ENCODE measurements at regions of chr20 and their contacts with region 1.

Region 1: DNA sequence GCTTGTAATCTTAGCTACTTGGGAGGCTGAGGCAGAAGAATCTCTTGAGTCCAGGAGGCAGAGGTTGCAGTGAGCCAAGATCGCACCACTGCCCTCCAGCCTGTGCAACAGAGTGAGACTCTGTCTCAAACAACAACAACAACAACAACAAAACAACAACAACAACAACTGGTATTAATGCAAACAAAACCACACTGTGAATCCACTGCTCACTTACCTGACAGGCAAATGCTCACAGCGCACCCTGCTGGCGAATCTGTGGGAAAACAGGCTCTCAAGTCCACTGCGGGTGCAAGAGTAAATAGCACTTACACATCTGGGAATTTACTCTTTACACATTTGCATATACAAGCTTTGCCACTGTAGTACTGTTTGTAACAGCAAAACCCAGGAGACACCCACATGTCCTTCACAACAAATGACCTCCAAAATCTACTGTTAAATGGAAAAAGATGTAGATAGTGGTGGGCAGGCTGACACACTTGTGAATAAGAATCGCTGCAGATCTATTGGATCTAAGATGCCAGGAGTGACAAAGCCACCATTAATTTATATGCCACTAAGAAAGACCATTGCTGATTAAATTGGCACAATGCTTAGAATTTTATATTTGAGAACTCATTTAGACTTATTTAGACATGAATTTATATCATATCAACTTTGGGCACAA is 29.3 kb downstream of the NSFL1C start:
- DNase-seq: peak; percentile 73 to 77 (median 74)
- H3K4me3 ChIP-seq: no peak overlapping the region
- H3K4me3 Mint-ChIP-seq: peak overlapping the region in 2 of 8 donors; percentile 27 to 53
- H3K27ac ChIP-seq: no peak overlapping the region
- H3K27ac Mint-ChIP-seq: peak overlapping the region in 3 of 7 donors; percentile 11 to 30 (median 22)
- H3K4me1 ChIP-seq: peaks cover 20% of the 10 kb centered on the region
- H3K4me1 Mint-ChIP-seq: peaks cover 23 to 59% (median 40%) of the 10 kb centered on the region in 4 donors
- H3K27me3 ChIP-seq: no peaks in the 10 kb centered on the region
- H3K27me3 Mint-ChIP-seq: peaks cover 0 to 4% of the 10 kb centered on the region in 2 donors

Region 2: GRCh38 chr20:1313236-1313964 is 124.0 kb before region 1 on chr20:
- CTCF ChIA-PET with region 1: interaction called, 73 read pairs
- POLR2A ChIA-PET with region 1: interaction called, 3 read pairs
- intact Hi-C with region 1: loop called (anchors 1 kb)
- DNase-seq: peak; percentile 54 to 59 (median 54)
- H3K4me3 ChIP-seq: no peak overlapping the region
- H3K4me3 Mint-ChIP-seq: no peak overlapping the region
- H3K27ac ChIP-seq: no peak overlapping the region
- H3K27ac Mint-ChIP-seq: peak overlapping the region in 1 of 7 donors; percentile 54
- H3K4me1 ChIP-seq: peaks cover 8% of the 10 kb centered on the region
- H3K4me1 Mint-ChIP-seq: peaks cover 4 to 10% (median 7%) of the 10 kb centered on the region in 4 donors
- H3K27me3 ChIP-seq: no peaks in the 10 kb centered on the region
- H3K27me3 Mint-ChIP-seq: no peaks in the 10 kb centered on the region

Region 3: GRCh38 chr20:1383623-1384404 is 53.6 kb before region 1 on chr20:
- CTCF ChIA-PET with region 1: interaction called, 11 read pairs
- POLR2A ChIA-PET with region 1: interaction called, 6 read pairs
- intact Hi-C with region 1: no loop called
- DNase-seq: no peak
- H3K4me3 ChIP-seq: no peak overlapping the region
- H3K4me3 Mint-ChIP-seq: no peak overlapping the region
- H3K27ac ChIP-seq: no peak overlapping the region
- H3K27ac Mint-ChIP-seq: peak overlapping the region in 4 of 7 donors; percentile 13 to 59 (median 34)
- H3K4me1 ChIP-seq: peaks cover 96% of the 10 kb centered on the region
- H3K4me1 Mint-ChIP-seq: peaks cover 69 to 98% (median 88%) of the 10 kb centered on the region in 4 donors
- H3K27me3 ChIP-seq: no peaks in the 10 kb centered on the region
- H3K27me3 Mint-ChIP-seq: no peaks in the 10 kb centered on the region

Region 4: DNA sequence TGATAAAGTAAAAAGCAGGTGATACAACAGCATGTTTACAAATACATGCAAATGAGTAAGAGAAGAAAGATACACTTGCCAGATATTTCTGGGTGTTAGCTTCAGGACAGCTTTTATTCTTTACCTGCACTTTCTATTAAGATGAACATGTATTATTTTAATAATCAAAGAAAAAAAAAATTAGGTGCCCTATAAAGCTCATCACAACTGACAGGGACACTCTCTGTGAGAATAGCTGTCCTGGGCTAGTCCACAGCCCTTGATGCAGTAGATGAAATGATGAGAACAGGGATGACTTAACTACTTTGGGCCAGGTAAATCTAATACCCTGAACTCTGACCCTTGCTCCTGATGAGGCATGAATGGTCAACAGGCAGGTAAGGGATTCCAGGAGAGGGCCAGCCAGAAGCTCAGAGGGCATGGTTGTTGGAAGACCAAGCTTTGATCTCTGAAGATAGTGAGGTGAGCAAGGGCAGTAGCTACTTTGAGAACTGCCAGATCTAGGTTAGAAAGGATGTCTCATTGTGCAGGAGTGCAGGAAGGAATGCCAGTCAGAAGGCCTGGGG is 13.6 kb after region 1 on chr20:
- CTCF ChIA-PET with region 1: interaction called, 34 read pairs
- POLR2A ChIA-PET with region 1: interaction called, 3 read pairs
- intact Hi-C with region 1: no loop called
- DNase-seq: no peak
- H3K4me3 ChIP-seq: no peak overlapping the region
- H3K4me3 Mint-ChIP-seq: no peak overlapping the region
- H3K27ac ChIP-seq: no peak overlapping the region
- H3K27ac Mint-ChIP-seq: peak overlapping the region in 1 of 7 donors; percentile 12
- H3K4me1 ChIP-seq: no peaks in the 10 kb centered on the region
- H3K4me1 Mint-ChIP-seq: no peaks in the 10 kb centered on the region
- H3K27me3 ChIP-seq: no peaks in the 10 kb centered on the region
- H3K27me3 Mint-ChIP-seq: no peaks in the 10 kb centered on the region

Region 5: DNA sequence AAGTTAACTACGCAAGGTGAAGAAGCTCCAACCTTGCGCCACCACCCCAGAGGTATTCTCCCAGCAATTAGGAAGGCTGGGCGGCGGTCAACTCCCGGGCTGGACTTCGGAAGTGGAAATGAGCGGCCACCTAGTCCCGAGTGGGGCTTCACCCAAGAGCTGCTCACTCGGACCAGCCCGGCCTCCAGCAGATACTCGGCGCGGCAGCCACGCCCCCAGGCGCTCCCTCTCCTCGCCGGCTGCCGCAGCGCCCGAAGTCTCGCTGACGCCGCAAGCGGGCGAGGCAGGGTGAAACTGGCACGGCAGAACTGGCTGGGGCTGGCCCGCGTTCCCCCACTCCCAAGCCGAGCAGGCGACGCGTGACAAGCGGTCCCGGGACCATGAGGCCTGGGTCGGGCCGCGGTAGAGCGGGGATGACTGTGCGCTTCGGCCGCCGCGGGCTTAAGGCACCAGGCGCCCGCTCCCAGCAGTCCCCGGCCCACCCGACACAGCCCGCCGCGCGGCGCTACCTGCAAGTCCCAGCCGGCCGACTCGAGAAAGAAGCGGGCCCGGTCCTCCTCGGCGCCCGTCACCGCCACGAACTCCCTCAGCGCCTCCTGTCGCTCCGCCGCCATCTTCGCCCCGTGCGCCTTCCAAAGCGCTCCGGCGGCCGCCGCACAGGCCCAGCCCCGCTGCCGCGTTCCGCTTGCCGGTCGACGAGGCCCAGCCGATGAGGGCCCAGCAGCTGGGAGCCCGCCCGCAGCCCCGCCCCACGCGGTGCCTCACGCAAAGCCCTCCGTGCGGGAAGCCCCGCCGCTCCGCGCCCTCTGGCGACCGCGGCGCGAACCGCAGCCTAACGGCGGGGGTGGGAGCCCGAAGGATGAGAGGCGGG is 29.1 kb after region 1 on chr20 and contains the start of gene NSFL1C:
- CTCF ChIA-PET with region 1: interaction called, 22 read pairs
- POLR2A ChIA-PET with region 1: no interaction called
- intact Hi-C with region 1: no loop called
- DNase-seq: peak; percentile 95 to 99 (median 97)
- H3K4me3 ChIP-seq: peak within 1 kb of the TSS; percentile 53 to 65
- H3K4me3 Mint-ChIP-seq: peak within 1 kb of the TSS; percentile 78 to 93 (median 88)
- H3K27ac ChIP-seq: peak within 1 kb of the TSS; percentile 89
- H3K27ac Mint-ChIP-seq: peak within 1 kb of the TSS; percentile 66 to 95 (median 91)
- H3K4me1 ChIP-seq: peaks cover 41% of the 10 kb centered on the region
- H3K4me1 Mint-ChIP-seq: peaks cover 34 to 49% (median 40%) of the 10 kb centered on the region in 4 donors
- H3K27me3 ChIP-seq: no peaks in the 10 kb centered on the region
- H3K27me3 Mint-ChIP-seq: peaks cover 1 to 5% of the 10 kb centered on the region in 2 donors
- total RNA-seq, gene NSFL1C: 57.5 to 65.8 TPM

Region 6: GRCh38 chr20:1636621-1637020 is 199.3 kb after region 1 on chr20:
- CTCF ChIA-PET with region 1: no interaction called
- POLR2A ChIA-PET with region 1: no interaction called
- intact Hi-C with region 1: no loop called
- DNase-seq: no peak
- H3K4me3 ChIP-seq: no peak overlapping the region
- H3K4me3 Mint-ChIP-seq: no peak overlapping the region
- H3K27ac ChIP-seq: no peak overlapping the region
- H3K27ac Mint-ChIP-seq: peak overlapping the region in 5 of 7 donors; percentile 16 to 68 (median 51)
- H3K4me1 ChIP-seq: peaks cover 41% of the 10 kb centered on the region
- H3K4me1 Mint-ChIP-seq: peaks cover 33 to 49% (median 40%) of the 10 kb centered on the region in 4 donors
- H3K27me3 ChIP-seq: no peaks in the 10 kb centered on the region
- H3K27me3 Mint-ChIP-seq: no peaks in the 10 kb centered on the region